ENCODE measurements at regions of chr2 and their contacts with region 1.

Region 1: GRCh38 chr2:200319548-200320337 is 13.2 kb downstream of the SPATS2L start:
- DNase-seq: peak; percentile 51
- H3K4me3 ChIP-seq: no peak overlapping the region
- H3K27ac ChIP-seq: peak overlapping the region; percentile 83
- H3K4me1 ChIP-seq: peaks cover 49% of the 10 kb centered on the region
- H3K27me3 ChIP-seq: no peaks in the 10 kb centered on the region
- CTCF ChIP-seq: no peak

Region 2: GRCh38 chr2:200345975-200346374 is 26.2 kb after region 1 on chr2:
- CTCF ChIA-PET with region 1: no interaction called
- dilution Hi-C with region 1: no loop called
- in situ Hi-C with region 1: no loop called
- intact Hi-C with region 1: no loop called
- DNase-seq: no peak
- H3K4me3 ChIP-seq: no peak overlapping the region
- H3K27ac ChIP-seq: no peak overlapping the region
- H3K4me1 ChIP-seq: no peaks in the 10 kb centered on the region
- H3K27me3 ChIP-seq: no peaks in the 10 kb centered on the region
- CTCF ChIP-seq: no peak

Region 3: GRCh38 chr2:200728630-200729029 is 408.9 kb after region 1 on chr2:
- CTCF ChIA-PET with region 1: interaction called, 14 read pairs
- dilution Hi-C with region 1: no loop called
- in situ Hi-C with region 1: no loop called
- intact Hi-C with region 1: no loop called
- DNase-seq: peak; percentile 37
- H3K4me3 ChIP-seq: no peak overlapping the region
- H3K27ac ChIP-seq: no peak overlapping the region
- H3K4me1 ChIP-seq: no peaks in the 10 kb centered on the region
- H3K27me3 ChIP-seq: no peaks in the 10 kb centered on the region
- CTCF ChIP-seq: no peak